ENCODE measurements at regions of chr1 and their contacts with region 1.

Region 1: DNA sequence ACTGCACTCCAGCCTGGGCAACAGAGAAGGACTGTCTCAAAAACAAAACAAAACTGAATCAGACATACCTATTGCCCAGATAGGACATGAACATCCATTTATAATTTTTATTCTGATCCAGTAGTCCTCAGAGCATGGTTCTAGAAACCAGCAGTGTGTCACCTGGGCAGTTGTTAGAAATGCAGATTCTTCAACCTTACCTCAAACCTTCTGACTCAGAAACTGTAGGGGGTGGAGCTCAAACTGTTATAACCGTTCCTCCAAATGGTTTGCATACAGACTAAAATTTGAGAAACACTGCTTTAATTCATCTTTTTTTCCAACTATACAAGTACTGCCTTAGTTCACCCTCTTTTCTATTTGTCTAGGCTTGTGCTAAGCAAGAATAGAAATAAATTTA is 6.0 kb downstream of the NASP start:
- DNase-seq: no peak
- ATAC-seq: no peak
- H3K4me3 ChIP-seq: no peak overlapping the region
- H3K27ac ChIP-seq: no peak overlapping the region
- H3K4me1 ChIP-seq: peaks cover 3% of the 10 kb centered on the region
- H3K27me3 ChIP-seq: no peaks in the 10 kb centered on the region

Region 2: DNA sequence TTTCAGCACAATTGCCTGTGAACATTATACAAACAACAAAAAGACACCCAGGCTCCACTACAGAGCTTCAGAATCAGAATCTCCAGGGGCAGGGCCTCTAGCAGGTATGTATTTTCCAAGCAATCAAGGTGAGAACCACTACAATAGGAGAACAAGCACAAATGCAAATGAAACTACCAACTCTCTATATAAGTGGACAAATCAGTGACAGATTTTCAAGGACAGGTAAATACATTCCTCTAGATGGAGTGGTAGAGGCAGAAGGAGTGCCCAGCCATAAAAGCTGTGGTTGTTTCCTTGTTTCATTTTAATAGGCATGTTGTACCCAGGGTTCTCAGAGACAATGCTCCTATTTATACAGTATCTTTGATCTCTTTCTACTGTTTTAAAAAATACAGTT is 54.1 kb after region 1 on chr1:
- intact Hi-C with region 1: loop called in 1 of 4 experiments (anchors 5 kb)
- DNase-seq: no peak
- ATAC-seq: no peak
- H3K4me3 ChIP-seq: no peak overlapping the region
- H3K27ac ChIP-seq: no peak overlapping the region
- H3K4me1 ChIP-seq: peaks cover 6% of the 10 kb centered on the region
- H3K27me3 ChIP-seq: no peaks in the 10 kb centered on the region

Region 3: GRCh38 chr1:45654540-45655280 is 64.8 kb after region 1 on chr1:
- intact Hi-C with region 1: no loop called
- DNase-seq: no peak
- ATAC-seq: no peak
- H3K4me3 ChIP-seq: no peak overlapping the region
- H3K27ac ChIP-seq: no peak overlapping the region
- H3K4me1 ChIP-seq: no peaks in the 10 kb centered on the region
- H3K27me3 ChIP-seq: no peaks in the 10 kb centered on the region

Region 4: GRCh38 chr1:46043458-46044017 is 453.7 kb after region 1 on chr1:
- intact Hi-C with region 1: no loop called
- DNase-seq: no peak
- ATAC-seq: no peak
- H3K4me3 ChIP-seq: no peak overlapping the region
- H3K27ac ChIP-seq: no peak overlapping the region
- H3K4me1 ChIP-seq: peaks cover 16% of the 10 kb centered on the region
- H3K27me3 ChIP-seq: no peaks in the 10 kb centered on the region

Measured in right cardiac atrium (tissue), 5 donors.